ENCODE measurements at regions of chr10 and their contacts with region 1.

Region 1: DNA sequence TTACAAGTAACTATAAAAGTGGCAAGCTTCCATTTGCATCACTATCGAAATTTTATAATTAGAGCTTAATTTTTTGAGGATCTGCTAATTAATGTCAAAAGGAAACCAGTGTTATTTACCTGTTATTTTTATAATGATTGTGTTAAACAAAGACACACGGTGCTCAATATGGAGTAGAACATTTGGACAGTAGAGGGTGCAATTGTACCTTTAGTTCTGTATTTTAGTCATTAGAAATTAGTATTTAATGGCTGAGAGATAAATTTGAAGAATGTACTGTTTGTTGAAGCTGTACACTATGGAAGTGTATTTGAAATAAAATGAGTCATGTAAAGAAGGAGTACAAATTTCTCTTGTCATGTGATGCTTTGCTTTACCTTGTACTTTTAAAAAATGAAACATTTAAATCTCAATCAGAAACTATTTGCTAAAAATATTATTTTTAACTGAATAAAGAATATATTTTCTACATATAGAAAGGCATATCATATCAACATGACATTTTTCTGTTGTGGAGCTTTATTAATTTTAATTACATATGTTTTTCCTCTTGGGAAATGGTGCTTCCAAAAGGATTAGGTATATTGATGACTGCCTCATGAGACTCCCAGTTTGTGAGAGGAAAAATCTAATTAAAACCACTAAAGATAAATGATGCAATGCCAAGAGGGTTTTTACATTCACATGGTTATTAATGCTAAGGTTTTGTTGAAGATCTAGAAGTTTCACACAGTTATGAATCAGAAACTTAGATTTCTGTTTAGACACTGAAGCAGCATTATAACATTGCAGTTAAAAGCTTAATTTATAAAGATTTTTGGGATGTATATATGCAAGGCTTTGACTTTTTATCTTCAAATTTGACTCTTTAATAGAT is 10.4 kb upstream of the PRKG1 start:
- DNase-seq: peak; percentile 62
- H3K4me3 ChIP-seq: no peak overlapping the region
- H3K27ac ChIP-seq: no peak overlapping the region
- H3K4me1 ChIP-seq: no peaks in the 10 kb centered on the region
- H3K27me3 ChIP-seq: no peaks in the 10 kb centered on the region
- CTCF ChIP-seq: peak; percentile 31 to 41
- POLR2A ChIP-seq: no peak

Region 2: GRCh38 chr10:51052163-51052562 is 11.7 kb before region 1 on chr10:
- CTCF ChIA-PET with region 1: interaction called, 14 read pairs
- POLR2A ChIA-PET with region 1: no interaction called
- dilution Hi-C with region 1: no loop called
- intact Hi-C with region 1: no loop called
- DNase-seq: no peak
- H3K4me3 ChIP-seq: no peak overlapping the region
- H3K27ac ChIP-seq: no peak overlapping the region
- H3K4me1 ChIP-seq: no peaks in the 10 kb centered on the region
- H3K27me3 ChIP-seq: peaks cover 1 to 6% of the 10 kb centered on the region in 2 experiments
- CTCF ChIP-seq: no peak
- POLR2A ChIP-seq: no peak

Region 3: DNA sequence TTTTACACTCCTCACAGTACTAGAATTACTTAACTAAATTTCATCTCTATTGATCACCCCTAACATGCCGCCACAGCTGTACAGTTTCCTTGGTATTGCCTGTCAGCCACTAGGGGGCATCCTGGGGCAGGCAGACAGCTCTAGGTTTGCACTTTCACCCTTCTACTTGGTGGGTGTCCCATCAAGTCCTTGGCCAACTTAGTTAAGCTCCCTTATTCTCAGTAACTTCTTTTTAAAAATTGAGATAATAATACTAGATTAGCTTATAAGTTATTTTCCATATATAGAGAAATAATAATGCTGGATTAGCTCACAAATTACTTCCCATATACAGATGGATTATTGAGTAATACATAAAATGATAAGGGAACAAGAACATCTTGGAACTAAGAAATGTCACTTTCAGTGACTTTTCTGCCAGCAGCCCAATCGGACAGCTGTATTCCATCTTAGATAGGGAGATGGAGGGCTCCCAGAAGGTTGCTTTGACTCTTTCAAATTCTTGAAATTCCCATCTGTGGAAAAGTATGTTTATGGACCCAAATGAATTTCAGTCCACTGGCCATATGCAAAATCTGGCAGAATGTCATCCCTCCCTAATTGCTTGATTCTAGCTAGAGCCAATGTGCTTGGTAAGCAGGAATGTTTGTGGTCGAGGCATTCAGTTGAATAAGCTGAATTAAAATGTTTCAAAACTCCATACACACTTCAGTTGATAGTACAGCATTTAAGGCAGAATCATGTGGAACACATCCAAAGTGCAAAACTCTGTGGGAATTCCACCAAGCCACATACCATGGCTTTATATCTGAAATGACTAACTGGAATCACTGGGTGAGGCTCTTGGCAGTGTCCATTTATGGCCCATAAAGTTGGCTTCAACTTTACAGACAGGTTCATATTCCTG is 325.8 kb after region 1 on chr10:
- CTCF ChIA-PET with region 1: interaction called, 18 read pairs
- POLR2A ChIA-PET with region 1: no interaction called
- dilution Hi-C with region 1: no loop called
- intact Hi-C with region 1: loop called (anchors 10 kb)
- DNase-seq: peak; percentile 48
- H3K4me3 ChIP-seq: no peak overlapping the region
- H3K27ac ChIP-seq: no peak overlapping the region
- H3K4me1 ChIP-seq: no peaks in the 10 kb centered on the region
- H3K27me3 ChIP-seq: no peaks in the 10 kb centered on the region
- CTCF ChIP-seq: peak; percentile 79 to 85
- POLR2A ChIP-seq: no peak

Region 4: GRCh38 chr10:51699475-51700227 is 635.8 kb after region 1 on chr10 and contains the start of gene CSTF2T:
- CTCF ChIA-PET with region 1: no interaction called
- POLR2A ChIA-PET with region 1: no interaction called
- dilution Hi-C with region 1: no loop called
- intact Hi-C with region 1: loop called (anchors 10 kb)
- DNase-seq: peak; percentile 93
- H3K4me3 ChIP-seq: peak within 1 kb of the TSS; percentile 18 to 75 (median 74)
- H3K27ac ChIP-seq: peak within 1 kb of the TSS; percentile 89
- H3K4me1 ChIP-seq: peaks cover 19% of the 10 kb centered on the region
- H3K27me3 ChIP-seq: peaks cover 1 to 2% of the 10 kb centered on the region in 2 experiments
- CTCF ChIP-seq: no peak
- POLR2A ChIP-seq: peak; percentile 83
- total RNA-seq, gene CSTF2T: 16.8 and 19.8 TPM in 2 replicates

Region 5: GRCh38 chr10:52004342-52004949 is 940.5 kb after region 1 on chr10:
- CTCF ChIA-PET with region 1: interaction called, 38 read pairs
- POLR2A ChIA-PET with region 1: no interaction called
- dilution Hi-C with region 1: no loop called
- intact Hi-C with region 1: loop called (anchors 5 kb)
- DNase-seq: peak; percentile 62
- H3K4me3 ChIP-seq: no peak overlapping the region
- H3K27ac ChIP-seq: no peak overlapping the region
- H3K4me1 ChIP-seq: no peaks in the 10 kb centered on the region
- H3K27me3 ChIP-seq: peaks cover 3 to 14% of the 10 kb centered on the region in 2 experiments
- CTCF ChIP-seq: peak; percentile 28 to 45
- POLR2A ChIP-seq: no peak

Measured in endothelial cell of umbilical vein (primary cell).